ENCODE measurements at regions of chr19 and their contacts with region 1.

Region 1: GRCh38 chr19:46736544-46737297 is 9.1 kb upstream of the FKRP start:
- DNase-seq: peak; percentile 62
- ATAC-seq: peak; percentile 8 to 42

Region 2: DNA sequence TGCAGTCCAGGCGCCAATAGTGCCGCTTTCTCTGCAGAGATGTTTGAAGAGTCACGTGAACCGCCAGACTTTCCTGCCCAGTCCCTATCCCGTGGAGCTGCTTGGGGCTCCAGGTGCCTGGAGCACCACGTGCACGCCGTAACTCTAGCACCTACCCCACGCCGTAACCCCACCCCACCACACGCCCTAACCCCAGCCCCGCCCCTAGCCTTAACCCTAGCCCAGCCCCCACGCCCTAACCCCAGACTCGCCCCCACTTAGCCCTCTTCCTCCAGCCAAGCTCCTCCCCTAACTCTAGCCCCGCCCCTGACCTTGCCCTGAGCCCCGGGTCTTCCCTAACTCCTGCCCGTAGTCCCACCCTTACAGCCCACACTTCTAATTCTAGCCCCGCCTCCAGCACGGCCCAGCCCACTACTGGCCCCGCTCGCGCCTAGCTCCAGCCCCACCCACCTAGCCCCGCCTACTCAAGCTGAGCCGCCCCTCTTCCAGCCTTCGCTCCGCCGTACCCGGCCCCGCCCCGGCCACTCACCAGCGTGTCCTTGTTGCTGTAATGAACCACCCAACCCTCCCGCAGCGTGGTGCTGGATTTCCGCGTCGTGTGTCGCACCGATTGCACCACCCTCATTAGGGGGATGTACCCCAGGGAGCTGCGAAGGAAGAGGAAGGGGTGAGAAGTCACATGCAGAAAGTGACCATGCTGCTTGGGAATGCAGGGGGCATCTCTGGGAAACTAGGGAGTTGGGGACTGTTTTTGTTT is 39.3 kb before region 1 on chr19:
- intact Hi-C with region 1: loop called in 1 of 2 experiments (anchors 5 kb)
- DNase-seq: peak; percentile 94
- ATAC-seq: peak; percentile 97 to 98